ENCODE measurements at regions of chr7 and their contacts with region 1.

Region 1: GRCh38 chr7:28955718-28956619 is 2.2 kb downstream of the TRIL start:
- DNase-seq: peak; percentile 73 to 85
- ATAC-seq: peak; percentile 37 to 80 (median 48)
- H3K4me3 ChIP-seq: peak overlapping the region; percentile 49 to 69 (median 62)
- H3K27ac ChIP-seq: peak overlapping the region; percentile 5 to 83 (median 60)
- H3K4me1 ChIP-seq: peaks cover 12 to 64% (median 46%) of the 10 kb centered on the region in 9 donors
- H3K27me3 ChIP-seq: peaks cover 0 to 60% (median 0%) of the 10 kb centered on the region in 7 donors
- CTCF ChIP-seq: peak; percentile 51 to 81 (median 58)

Region 2: DNA sequence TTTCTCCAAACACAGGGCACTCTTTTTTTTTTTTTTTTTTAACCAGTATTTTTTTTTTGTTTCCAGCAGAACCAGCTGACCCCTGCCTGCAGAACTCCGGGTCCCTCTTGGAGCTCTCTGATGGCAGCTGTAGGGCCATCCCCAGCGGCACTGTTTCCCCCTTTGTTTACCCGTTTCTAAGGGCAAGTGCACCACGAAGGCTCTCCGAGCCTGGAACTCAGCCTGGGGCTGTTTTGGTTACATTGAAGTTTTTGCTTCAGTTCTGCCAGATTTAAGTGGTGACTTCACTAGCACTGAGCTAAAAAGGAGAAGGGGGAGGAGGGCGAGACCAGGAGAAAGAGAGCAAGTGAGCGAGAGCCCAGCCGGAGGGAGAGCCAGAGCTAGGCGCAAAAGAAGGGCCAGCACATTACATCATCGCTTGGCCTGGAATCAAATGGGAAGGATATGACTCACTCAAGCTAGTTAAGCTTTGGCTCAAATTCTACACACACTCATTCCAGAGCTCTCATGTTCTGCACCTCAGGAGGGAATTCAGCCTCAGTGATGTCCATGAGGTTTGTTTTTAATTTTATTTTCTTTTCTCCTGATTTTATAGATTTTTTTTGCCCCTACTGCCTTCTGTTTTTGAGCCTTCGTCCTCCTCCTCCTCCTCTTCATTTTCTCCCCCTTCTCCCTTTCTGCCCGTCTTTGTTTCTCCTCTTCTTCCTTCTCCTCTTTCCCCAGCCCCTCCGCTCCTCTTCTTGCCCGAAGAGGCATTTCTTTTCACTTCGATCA is 270.1 kb before region 1 on chr7:
- intact Hi-C with region 1: loop called in 1 of 10 experiments (anchors 10 kb)
- DNase-seq: peak; percentile 78 to 99
- ATAC-seq: peak; percentile 92 to 96 (median 95)
- H3K4me3 ChIP-seq: peak overlapping the region; percentile 40 to 69 (median 56)
- H3K27ac ChIP-seq: peak overlapping the region; percentile 59 to 96 (median 87)
- H3K4me1 ChIP-seq: peaks cover 3 to 69% (median 38%) of the 10 kb centered on the region in 9 donors
- H3K27me3 ChIP-seq: no peaks in the 10 kb centered on the region
- CTCF ChIP-seq: no peak

Region 3: DNA sequence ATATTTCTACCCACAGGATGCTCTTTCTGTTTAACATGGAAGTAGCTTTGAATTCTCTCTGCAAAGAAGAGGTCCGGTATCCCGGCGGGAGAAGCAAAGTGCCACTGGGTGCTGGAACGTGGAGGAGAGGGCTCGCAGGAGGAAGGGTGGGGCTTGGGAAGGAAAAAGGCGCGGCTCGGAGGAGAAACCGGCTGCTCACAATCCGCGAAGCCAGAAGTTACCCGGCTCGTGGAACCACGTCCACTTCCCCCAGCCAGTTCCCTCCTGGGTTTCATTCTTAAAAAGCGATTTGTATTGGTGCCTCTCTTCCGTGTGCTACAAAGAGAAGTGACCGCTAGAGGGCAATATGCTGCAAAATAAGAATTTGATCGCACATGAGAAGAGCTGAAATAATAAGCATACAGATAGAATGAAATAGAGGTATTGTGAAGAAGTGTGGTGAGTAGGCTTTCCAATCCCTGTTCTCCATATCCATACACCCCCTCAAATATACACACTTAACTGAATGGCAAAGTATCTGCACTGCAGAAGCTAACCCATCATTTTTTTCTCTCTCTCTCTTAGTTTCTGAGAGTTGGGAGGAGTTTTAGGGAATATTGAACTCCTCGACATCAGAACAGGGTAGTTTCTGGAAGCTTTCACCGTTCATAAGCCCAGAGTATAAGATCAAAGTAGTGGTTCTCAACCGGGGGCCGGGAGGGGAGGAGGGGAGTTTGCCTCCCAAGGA is 28.9 kb before region 1 on chr7:
- intact Hi-C with region 1: loop called in 4 of 10 experiments (anchors 2 kb)
- DNase-seq: peak; percentile 66 to 86
- ATAC-seq: peak; percentile 82 to 96 (median 94)
- H3K4me3 ChIP-seq: peak overlapping the region; percentile 24 to 65 (median 52)
- H3K27ac ChIP-seq: peak overlapping the region in 9 of 10 donors; percentile 11 to 69 (median 45)
- H3K4me1 ChIP-seq: peaks cover 0 to 24% (median 18%) of the 10 kb centered on the region in 9 donors
- H3K27me3 ChIP-seq: peaks cover 0 to 6% (median 0%) of the 10 kb centered on the region in 7 donors
- CTCF ChIP-seq: peak; percentile 73 to 91 (median 84)

Region 4: DNA sequence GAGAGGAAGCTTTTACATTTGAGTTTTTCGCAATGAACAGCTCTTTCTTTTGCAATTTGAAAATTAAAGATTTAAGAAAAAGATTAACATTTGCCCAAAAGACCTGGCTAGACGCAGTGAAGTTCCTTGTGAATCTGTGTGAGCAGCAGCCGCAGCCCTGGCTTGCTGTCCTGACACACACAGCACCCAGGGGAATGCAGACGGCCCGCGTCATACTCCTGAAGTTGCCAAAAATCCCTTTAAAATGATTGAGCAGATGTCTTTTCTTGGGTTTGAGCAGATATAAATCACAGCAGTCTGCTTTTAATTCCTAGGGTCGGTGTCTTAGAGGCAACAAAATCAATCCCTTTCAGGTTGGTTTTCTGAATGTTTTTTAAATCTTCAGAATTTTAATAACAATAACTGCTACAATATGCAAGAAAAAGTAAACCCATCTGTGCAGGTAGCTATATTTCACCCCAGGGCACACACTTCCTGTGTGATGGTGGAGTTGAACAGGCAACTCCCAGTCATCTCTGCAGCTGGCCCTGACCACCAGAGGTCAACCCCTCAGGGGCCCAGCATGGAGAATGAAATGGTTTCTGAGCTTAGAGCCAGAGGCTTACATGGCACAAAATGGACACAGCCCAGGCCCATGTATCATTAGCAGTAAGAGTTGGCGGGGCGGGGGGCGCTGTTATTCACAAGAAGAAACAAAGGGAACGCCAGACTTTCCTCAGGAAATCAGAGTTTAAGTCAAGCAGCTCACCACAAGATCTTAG is 34.4 kb after region 1 on chr7:
- intact Hi-C with region 1: loop called in 4 of 10 experiments (anchors 2 to 5 kb)
- DNase-seq: peak; percentile 73 to 80
- ATAC-seq: peak; percentile 55 to 88 (median 81)
- H3K4me3 ChIP-seq: no peak overlapping the region
- H3K27ac ChIP-seq: peak overlapping the region in 5 of 10 donors; percentile 1 to 77 (median 29)
- H3K4me1 ChIP-seq: peaks cover 0 to 49% (median 42%) of the 10 kb centered on the region in 9 donors
- H3K27me3 ChIP-seq: no peaks in the 10 kb centered on the region
- CTCF ChIP-seq: no peak

Region 5: GRCh38 chr7:29017713-29018112 is 61.7 kb after region 1 on chr7:
- intact Hi-C with region 1: loop called in 1 of 10 experiments (anchors 5 kb)
- DNase-seq: no peak
- ATAC-seq: peak in 2 of 8 donors; percentile 37 to 54
- H3K4me3 ChIP-seq: no peak overlapping the region
- H3K27ac ChIP-seq: peak overlapping the region in 1 of 10 donors; percentile 17
- H3K4me1 ChIP-seq: peaks cover 3 to 35% (median 15%) of the 10 kb centered on the region in 9 donors
- H3K27me3 ChIP-seq: no peaks in the 10 kb centered on the region
- CTCF ChIP-seq: no peak

Region 6: GRCh38 chr7:29035044-29035740 is 79.2 kb after region 1 on chr7:
- intact Hi-C with region 1: no loop called
- DNase-seq: no peak
- ATAC-seq: peak in 7 of 8 donors; percentile 25 to 91 (median 67)
- H3K4me3 ChIP-seq: no peak overlapping the region
- H3K27ac ChIP-seq: peak overlapping the region in 1 of 10 donors; percentile 12
- H3K4me1 ChIP-seq: peaks cover 0 to 42% (median 24%) of the 10 kb centered on the region in 9 donors
- H3K27me3 ChIP-seq: no peaks in the 10 kb centered on the region
- CTCF ChIP-seq: no peak

Region 7: GRCh38 chr7:29078311-29079260 is 122.6 kb after region 1 on chr7:
- intact Hi-C with region 1: no loop called
- DNase-seq: no peak
- ATAC-seq: no peak
- H3K4me3 ChIP-seq: no peak overlapping the region
- H3K27ac ChIP-seq: no peak overlapping the region
- H3K4me1 ChIP-seq: no peaks in the 10 kb centered on the region
- H3K27me3 ChIP-seq: no peaks in the 10 kb centered on the region
- CTCF ChIP-seq: no peak

Region 8: DNA sequence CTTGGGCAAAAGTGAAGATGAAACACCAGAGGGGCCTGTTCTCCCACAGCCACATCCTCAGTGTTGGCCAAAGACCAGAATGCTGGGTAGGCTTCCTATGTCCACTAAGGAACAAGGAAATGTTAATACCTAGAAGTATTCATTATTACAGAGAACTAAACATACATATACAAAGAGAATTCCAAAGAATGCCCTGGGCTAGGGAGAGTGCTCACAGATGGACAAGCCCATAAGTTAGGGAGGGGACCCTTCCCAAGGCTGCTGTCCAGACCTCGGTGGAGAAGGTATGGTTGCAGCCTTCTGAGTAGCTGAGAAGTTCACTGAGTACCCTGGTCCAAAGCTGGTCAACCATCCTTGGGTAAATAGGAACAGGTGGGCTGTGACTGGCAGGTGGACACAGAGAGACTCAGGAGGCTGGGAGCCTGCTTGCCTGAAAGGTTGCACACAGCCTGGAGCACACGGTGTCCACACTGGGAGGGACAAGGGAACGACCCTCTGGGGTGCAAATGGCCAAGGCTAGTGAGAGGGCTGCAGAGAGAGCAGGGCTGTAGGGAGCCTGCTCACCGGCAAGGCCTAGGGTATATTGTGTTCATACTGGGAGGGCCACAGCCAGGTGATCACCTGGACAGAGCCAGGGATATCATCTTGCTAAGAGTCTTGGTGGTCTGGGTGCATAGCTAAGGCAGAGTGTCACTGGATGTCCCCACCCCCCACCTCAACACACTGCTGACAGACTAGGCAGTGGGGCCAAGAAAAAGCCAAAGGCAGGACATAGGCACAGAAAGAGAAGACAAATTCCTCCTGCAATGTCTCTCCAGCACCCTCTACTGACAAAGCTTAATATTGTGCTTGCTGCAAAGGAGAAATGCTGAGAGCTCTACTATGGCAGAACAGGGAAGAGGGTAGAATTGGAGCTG is 150.0 kb after region 1 on chr7:
- intact Hi-C with region 1: loop called in 8 of 10 experiments (anchors 1 to 10 kb)
- DNase-seq: peak; percentile 11 to 67
- ATAC-seq: peak; percentile 69 to 86 (median 79)
- H3K4me3 ChIP-seq: no peak overlapping the region
- H3K27ac ChIP-seq: no peak overlapping the region
- H3K4me1 ChIP-seq: peaks cover 0 to 24% (median 5%) of the 10 kb centered on the region in 9 donors
- H3K27me3 ChIP-seq: no peaks in the 10 kb centered on the region
- CTCF ChIP-seq: peak; percentile 72 to 91 (median 85)

Region 9: DNA sequence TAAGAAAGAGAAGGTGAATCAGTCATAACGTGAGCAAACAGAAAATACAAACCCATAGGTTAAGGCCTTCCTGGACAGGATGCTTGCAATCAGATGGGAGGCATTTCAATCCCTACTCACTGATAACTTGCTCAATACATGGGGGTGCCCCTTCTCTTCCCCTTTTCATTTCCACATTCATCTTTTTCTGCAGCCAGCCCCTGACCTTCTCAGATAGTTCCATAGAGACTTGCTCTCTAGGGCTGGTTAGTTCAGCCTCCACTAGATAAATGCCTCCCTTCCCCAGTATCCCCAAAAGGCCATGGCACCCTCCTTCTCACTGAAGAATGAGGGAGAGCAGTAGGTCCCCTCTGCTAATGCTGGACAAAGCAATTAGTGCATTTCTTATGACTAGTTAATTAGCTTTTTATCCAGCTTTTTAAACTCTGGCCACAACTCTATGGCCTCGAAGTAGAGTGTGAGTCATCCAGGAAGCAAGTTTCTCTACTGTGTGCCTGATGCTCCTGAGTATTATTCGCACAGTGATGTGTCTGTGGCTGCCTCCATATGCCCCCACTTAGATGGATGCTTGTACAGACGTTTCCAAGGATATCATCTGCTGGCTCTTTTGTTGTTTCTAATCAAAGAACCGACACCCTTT is 251.3 kb after region 1 on chr7:
- intact Hi-C with region 1: no loop called
- DNase-seq: no peak
- ATAC-seq: peak in 2 of 8 donors; percentile 52 to 53
- H3K4me3 ChIP-seq: no peak overlapping the region
- H3K27ac ChIP-seq: no peak overlapping the region
- H3K4me1 ChIP-seq: peaks cover 0 to 24% (median 0%) of the 10 kb centered on the region in 9 donors
- H3K27me3 ChIP-seq: no peaks in the 10 kb centered on the region
- CTCF ChIP-seq: no peak

Region 10: GRCh38 chr7:29516491-29516890 is 560.5 kb after region 1 on chr7:
- intact Hi-C with region 1: no loop called
- DNase-seq: no peak
- ATAC-seq: no peak
- H3K4me3 ChIP-seq: no peak overlapping the region
- H3K27ac ChIP-seq: no peak overlapping the region
- H3K4me1 ChIP-seq: no peaks in the 10 kb centered on the region
- H3K27me3 ChIP-seq: no peaks in the 10 kb centered on the region
- CTCF ChIP-seq: no peak